ENCODE measurements at regions of chr16 and their contacts with region 1.

Region 1: GRCh38 chr16:47448830-47449575 is 11.9 kb downstream of the ITFG1 start:
- DNase-seq: no peak
- ATAC-seq: no peak
- H3K4me3 ChIP-seq: no peak overlapping the region
- H3K27ac ChIP-seq: no peak overlapping the region
- H3K4me1 ChIP-seq: peaks cover 2% of the 10 kb centered on the region
- H3K27me3 ChIP-seq: no peaks in the 10 kb centered on the region

Region 2: GRCh38 chr16:47229053-47230050 is 219.7 kb before region 1 on chr16:
- intact Hi-C with region 1: no loop called
- DNase-seq: no peak
- ATAC-seq: no peak
- H3K4me3 ChIP-seq: no peak overlapping the region
- H3K27ac ChIP-seq: no peak overlapping the region
- H3K4me1 ChIP-seq: no peaks in the 10 kb centered on the region
- H3K27me3 ChIP-seq: no peaks in the 10 kb centered on the region

Region 3: DNA sequence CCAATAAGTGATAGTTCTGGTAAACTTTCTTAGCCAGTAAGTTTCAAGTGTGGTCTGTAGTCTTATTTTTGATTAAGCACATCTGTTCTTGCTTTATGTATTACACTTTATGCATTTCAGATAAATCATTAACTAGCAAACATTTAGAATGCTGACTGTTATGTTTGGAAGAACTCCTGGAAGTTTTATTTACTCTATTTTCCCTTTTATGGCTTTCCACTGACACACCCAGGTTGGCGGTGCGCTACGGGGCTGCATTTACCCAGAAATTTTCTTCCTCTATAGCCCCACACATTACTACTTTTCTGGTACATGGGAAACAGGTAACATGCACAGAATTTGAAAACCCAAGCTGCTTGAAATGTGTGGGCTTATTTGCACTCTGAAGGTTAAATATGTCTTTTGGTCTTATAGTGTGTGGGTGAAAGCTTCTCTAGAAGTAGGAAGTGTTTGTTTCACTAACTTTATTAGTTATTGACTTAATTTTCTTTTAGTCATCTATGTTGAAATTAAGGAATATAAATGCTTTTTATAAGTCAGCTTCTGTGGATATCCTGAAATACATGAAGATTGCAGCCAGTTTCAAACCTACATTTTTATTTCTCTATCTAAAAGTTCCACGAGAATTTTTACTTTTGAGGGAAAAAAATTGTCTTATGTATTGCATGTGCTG is 215.8 kb after region 1 on chr16:
- intact Hi-C with region 1: loop called in 1 of 4 experiments (anchors 5 kb)
- DNase-seq: no peak
- ATAC-seq: no peak
- H3K4me3 ChIP-seq: no peak overlapping the region
- H3K27ac ChIP-seq: no peak overlapping the region
- H3K4me1 ChIP-seq: no peaks in the 10 kb centered on the region
- H3K27me3 ChIP-seq: no peaks in the 10 kb centered on the region

Measured in right cardiac atrium (tissue), 5 donors.